Left cardiac atrium (tissue), 4 donors: ENCODE measurements at regions of chr3 and their contacts with region 1.

Region 1: GRCh38 chr3:178443634-178444033 is 92.6 kb upstream of the KCNMB2 start:
- DNase-seq: no peak
- ATAC-seq: peak; percentile 27 to 32

Region 2: DNA sequence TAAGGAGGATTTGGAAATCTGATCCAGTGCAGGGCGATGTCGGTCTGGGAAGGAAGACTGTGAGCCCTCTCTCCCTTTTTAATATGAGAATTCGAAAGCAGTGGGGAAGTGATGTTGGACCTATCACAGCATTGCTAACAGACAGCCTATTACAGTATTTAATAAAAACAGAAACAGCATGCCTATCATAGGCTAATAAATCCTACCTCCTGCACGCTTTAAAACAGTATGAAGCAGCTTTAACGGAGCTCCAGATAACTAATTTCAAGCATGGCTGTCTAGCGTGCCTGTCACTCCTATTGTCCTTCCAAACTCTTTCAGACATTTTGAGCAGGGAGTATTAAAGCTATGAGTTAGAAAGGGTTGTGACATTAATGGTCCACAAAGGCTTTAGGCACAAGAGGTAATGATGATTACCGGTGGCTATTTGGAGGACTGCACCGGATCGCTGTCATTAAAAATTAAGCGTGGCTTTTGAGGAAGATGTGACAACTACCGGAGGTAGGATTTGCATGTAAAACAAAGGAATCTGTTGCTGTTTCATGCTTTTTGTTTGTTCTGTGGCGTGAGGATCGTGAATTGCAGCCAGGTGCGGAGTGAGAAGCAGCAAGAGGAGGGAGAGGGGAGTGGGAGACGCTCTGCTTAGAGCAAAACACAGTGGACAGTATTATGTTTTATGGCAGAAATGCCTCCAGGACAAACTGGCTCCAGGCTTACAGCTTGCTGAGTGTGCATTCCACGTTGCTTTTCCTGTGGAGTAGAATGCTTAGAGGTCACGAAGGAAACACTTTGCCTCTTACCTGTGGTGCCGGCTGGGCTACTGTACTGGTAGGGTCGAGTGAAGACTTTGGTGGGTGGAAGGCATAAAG is 92.8 kb after region 1 on chr3 and contains the start of gene KCNMB2:
- intact Hi-C with region 1: no loop called
- DNase-seq: no peak
- ATAC-seq: peak; percentile 93 to 94
- total RNA-seq, gene KCNMB2: 7.8 to 9.8 TPM

Region 3: DNA sequence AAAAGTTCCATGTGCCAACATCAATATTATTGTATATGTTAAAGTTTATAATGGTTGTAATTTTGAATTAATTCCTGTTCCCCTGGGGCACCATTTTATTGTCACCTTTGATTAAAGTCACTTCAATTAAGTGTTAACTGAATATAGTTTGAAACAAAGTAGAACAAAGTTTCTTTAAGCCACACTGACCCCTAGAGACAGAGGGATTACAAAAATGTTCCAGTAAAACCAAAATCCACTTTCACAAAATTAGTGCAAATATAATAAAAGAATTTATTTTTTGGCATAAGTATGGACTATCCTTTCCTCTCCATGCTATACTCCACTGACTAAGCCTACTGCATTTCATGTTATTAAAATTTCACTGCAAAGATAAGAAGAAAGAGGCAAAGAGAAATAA is 504.1 kb after region 1 on chr3:
- intact Hi-C with region 1: loop called in 1 of 2 experiments (anchors 5 kb)
- DNase-seq: no peak
- ATAC-seq: no peak

Region 4: GRCh38 chr3:178966299-178967176 is 522.9 kb after region 1 on chr3:
- intact Hi-C with region 1: loop called (anchors 5 to 10 kb)
- DNase-seq: no peak
- ATAC-seq: peak; percentile 37 to 44